Gastrocnemius medialis (tissue), 4 donors: ENCODE measurements at regions of chr19 and their contacts with region 1.

Region 1: DNA sequence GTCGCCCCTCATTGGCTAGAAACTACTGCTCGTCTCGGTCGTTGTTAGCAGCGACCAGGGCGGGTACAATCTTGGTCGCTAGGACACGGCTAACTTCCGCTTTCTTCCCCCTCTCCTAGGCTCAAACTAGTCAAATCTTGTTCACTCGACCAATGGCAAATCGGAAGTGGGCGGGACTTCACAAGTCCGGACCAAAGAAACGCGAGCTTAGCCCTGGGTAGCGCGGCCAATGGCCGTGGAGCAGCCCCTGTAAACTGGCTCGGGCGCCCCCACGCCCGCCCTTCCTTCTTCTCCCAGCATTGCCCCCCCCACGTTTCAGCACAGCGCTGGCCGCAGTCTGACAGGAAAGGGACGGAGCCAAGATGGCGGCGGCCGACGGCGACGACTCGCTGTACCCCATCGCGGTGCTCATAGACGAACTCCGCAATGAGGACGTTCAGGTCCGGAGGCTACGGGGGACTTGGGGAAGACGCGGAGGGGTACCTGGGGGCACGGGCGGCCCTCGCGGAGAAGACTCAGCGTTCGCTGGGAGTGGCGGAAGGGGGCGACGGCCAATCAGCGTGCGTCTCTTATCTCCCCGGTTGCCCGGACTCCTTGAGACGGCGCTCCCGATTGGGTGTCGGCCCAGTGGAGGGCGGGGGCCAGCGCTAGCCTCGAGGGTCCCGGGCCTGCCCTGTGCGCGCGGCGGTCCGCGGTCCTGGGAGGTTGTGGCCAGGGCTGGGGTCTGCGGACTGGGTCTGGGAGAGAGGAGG is at the start of gene PPP2R1A:
- DNase-seq: peak; percentile 100
- ATAC-seq: peak; percentile 90 to 95
- H3K4me3 ChIP-seq: peak within 1 kb of the TSS; percentile 68 to 99 (median 88)
- H3K27ac ChIP-seq: peak within 1 kb of the TSS; percentile 92 to 99 (median 94)
- H3K4me1 ChIP-seq: peaks cover 47 to 53% of the 10 kb centered on the region in 2 donors
- H3K27me3 ChIP-seq: no peaks in the 10 kb centered on the region
- CTCF ChIP-seq: no peak
- POLR2A ChIP-seq: peak; percentile 88 to 95
- total RNA-seq, gene PPP2R1A: 263 to 302 (median 290) TPM

Region 2: GRCh38 chr19:51926784-51927742 is 262.8 kb before region 1 on chr19 and contains the start of gene ZNF613:
- in situ Hi-C with region 1: no loop called
- intact Hi-C with region 1: no loop called
- DNase-seq: peak; percentile 78 to 83
- ATAC-seq: peak; percentile 95
- H3K4me3 ChIP-seq: peak within 1 kb of the TSS; percentile 73 to 95 (median 88)
- H3K27ac ChIP-seq: peak within 1 kb of the TSS; percentile 76 to 91 (median 86)
- H3K4me1 ChIP-seq: peaks cover 5 to 11% of the 10 kb centered on the region in 2 donors
- H3K27me3 ChIP-seq: no peaks in the 10 kb centered on the region
- CTCF ChIP-seq: peak in 2 of 5 experiments; percentile 35
- POLR2A ChIP-seq: no peak
- total RNA-seq, gene ZNF613: 1.3 to 9.4 (median 3.8) TPM

Region 3: DNA sequence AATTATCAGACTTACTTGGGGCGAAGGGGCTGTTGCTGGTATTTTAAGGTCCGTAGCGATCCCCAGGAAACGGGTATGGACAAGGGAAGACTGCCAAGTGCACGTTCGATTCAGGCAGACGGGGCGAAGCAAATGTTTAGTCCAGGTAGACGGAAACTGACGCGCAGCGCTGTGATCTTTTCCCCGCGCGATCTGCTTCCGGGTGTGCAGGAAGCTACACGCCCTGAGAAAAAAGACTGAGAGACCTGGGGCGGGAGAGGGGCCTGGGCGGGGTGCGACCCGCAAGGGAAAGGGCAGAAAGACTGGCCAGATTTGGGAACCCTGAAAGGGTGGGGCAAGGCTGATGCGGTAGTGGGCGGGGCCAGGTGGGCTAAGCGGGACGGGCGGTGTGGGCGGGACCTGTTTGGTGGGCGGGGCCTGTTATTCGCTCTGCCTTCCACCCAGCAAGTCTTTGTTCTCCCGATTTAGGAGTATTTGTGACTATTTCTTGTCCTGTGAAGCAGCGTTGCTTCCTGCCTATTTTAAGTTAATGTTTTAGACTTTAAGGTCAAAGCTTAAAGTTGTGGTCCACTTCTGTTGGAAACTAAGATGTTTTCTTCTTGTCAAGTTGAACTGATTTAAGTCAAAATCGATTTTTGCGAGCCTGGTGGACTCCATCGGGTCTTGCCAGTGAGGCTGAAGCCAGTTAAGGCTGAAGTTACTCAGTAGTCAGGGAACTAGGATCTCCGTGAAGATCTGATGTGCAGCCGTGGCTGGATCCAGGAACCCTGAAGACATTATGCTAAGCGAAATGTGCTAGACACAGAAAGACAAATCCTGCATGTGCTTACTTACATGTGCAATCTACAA is 18.4 kb before region 1 on chr19 and contains the start of gene ZNF836:
- in situ Hi-C with region 1: no loop called
- intact Hi-C with region 1: loop called (anchors 1 kb)
- DNase-seq: peak; percentile 83 to 84
- ATAC-seq: peak; percentile 91 to 92
- H3K4me3 ChIP-seq: peak within 1 kb of the TSS; percentile 71 to 94 (median 82)
- H3K27ac ChIP-seq: peak within 1 kb of the TSS; percentile 78 to 85 (median 84)
- H3K4me1 ChIP-seq: peaks cover 7 to 9% of the 10 kb centered on the region in 2 donors
- H3K27me3 ChIP-seq: no peaks in the 10 kb centered on the region
- CTCF ChIP-seq: no peak
- POLR2A ChIP-seq: peak in 1 of 2 donors; percentile 13
- total RNA-seq, gene ZNF836: 1.2 to 4.9 (median 2.3) TPM

Region 4: GRCh38 chr19:52200044-52200443 is 10.1 kb after region 1 on chr19:
- in situ Hi-C with region 1: no loop called
- intact Hi-C with region 1: loop called (anchors 1 kb)
- DNase-seq: peak; percentile 79 to 86
- ATAC-seq: peak; percentile 96 to 98
- H3K4me3 ChIP-seq: no peak overlapping the region
- H3K27ac ChIP-seq: peak overlapping the region; percentile 92 to 99 (median 94)
- H3K4me1 ChIP-seq: peaks cover 44 to 82% of the 10 kb centered on the region in 2 donors
- H3K27me3 ChIP-seq: no peaks in the 10 kb centered on the region
- CTCF ChIP-seq: no peak
- POLR2A ChIP-seq: peak; percentile 56 to 61

Region 5: DNA sequence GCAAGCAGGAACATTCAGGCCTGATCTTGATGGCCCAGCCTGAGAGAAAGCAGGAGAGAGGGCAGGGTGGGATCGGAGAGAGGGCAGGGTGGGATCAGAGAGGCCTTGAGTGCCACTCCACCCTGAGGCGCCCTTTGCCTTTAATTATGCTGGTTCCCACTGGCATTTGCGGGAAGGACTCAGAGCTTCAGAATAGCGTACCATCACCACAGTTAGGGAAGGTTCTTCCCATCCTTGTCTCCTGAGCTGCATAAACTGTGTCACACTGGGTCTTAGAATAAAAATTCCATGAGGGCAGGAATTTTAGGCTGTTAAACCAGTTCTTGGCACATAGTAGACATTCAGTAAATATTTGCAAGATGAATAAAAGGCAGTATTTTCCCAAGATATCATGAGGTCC is 24.3 kb after region 1 on chr19:
- in situ Hi-C with region 1: no loop called
- intact Hi-C with region 1: no loop called
- DNase-seq: no peak
- ATAC-seq: no peak
- H3K4me3 ChIP-seq: no peak overlapping the region
- H3K27ac ChIP-seq: no peak overlapping the region
- H3K4me1 ChIP-seq: no peaks in the 10 kb centered on the region
- H3K27me3 ChIP-seq: no peaks in the 10 kb centered on the region
- CTCF ChIP-seq: no peak
- POLR2A ChIP-seq: no peak

Region 6: DNA sequence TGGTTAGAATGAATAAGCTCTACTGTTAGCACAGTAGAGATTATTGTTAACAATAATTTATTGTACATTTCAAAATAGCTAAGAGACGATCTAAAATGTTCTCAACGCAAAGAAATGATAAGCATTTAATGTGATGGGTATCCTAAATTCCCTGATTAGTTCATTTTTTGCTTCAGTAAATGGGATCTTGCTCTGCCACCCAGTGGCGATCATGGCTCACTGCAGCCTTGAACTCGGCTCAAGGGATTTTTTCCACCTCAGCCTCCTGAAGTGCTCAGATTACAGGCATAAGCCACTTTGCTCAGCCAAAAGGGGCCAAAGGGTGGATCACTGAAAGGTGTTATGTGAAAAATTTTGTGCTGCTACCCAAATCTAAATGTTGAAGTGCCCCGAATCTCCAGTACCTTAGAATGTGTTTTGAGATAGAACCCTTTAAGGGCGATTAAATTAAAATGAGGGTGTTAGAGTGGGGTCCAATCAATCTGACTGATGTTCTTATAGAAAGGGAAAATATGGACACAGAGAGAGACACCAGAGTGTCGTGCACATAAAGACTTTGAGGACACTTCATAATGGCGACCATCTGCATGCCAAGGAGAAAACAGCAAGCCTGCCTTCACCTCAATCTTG is 48.0 kb after region 1 on chr19:
- in situ Hi-C with region 1: no loop called
- intact Hi-C with region 1: loop called (anchors 5 kb)
- DNase-seq: peak; percentile 23 to 55
- ATAC-seq: peak; percentile 75 to 79
- H3K4me3 ChIP-seq: no peak overlapping the region
- H3K27ac ChIP-seq: no peak overlapping the region
- H3K4me1 ChIP-seq: no peaks in the 10 kb centered on the region
- H3K27me3 ChIP-seq: no peaks in the 10 kb centered on the region
- CTCF ChIP-seq: peak; percentile 84 to 93 (median 86)
- POLR2A ChIP-seq: no peak

Region 7: DNA sequence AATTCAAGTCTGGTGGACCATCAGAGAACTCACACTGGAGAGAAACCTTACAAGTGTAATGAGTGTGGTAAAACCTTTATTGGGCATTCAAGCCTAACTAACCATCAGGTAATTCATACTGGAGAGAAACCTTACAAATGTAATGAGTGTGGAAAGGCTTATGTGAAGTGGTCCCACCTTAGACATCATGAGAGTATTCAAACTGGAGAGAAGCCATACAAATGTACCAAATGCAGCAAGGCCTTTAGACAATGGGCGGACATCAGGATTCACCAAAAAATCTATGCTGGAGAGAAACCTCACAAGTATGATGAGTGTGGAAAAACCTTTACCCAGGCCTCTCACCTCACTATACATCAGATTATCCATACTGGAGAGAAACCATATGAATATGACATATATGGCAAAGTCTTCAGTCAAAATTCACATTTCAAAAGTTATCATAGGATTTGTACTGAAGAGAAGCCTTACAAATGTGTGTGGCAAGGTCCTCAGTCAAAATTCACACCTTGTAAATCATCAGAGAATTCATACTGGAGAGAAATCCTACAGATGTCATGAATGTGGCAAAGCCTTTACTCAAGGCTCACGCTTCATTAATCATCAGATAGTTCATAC is 1022.9 kb after region 1 on chr19:
- in situ Hi-C with region 1: no loop called
- intact Hi-C with region 1: no loop called
- DNase-seq: no peak
- ATAC-seq: no peak
- H3K4me3 ChIP-seq: peak overlapping the region in 1 of 4 donors; percentile 28
- H3K27ac ChIP-seq: no peak overlapping the region
- H3K4me1 ChIP-seq: no peaks in the 10 kb centered on the region
- H3K27me3 ChIP-seq: no peaks in the 10 kb centered on the region
- CTCF ChIP-seq: no peak
- POLR2A ChIP-seq: no peak